Ascending aorta (tissue), 2 donors: ENCODE measurements at regions of chr11 and their contacts with region 1.

Region 1: GRCh38 chr11:46616998-46617675 is at the starts of genes ATG13 and HARBI1:
- DNase-seq: peak; percentile 36 to 94
- H3K4me3 ChIP-seq: peak within 1 kb of the TSS; percentile 96 to 100
- H3K27ac ChIP-seq: peak within 1 kb of the TSS; percentile 98 to 99
- H3K4me1 ChIP-seq: peaks cover 3 to 19% of the 10 kb centered on the region in 2 donors
- H3K27me3 ChIP-seq: no peaks in the 10 kb centered on the region
- CTCF ChIP-seq: no peak
- total RNA-seq, gene ATG13: 208 TPM
- total RNA-seq, gene HARBI1: not detected

Region 2: DNA sequence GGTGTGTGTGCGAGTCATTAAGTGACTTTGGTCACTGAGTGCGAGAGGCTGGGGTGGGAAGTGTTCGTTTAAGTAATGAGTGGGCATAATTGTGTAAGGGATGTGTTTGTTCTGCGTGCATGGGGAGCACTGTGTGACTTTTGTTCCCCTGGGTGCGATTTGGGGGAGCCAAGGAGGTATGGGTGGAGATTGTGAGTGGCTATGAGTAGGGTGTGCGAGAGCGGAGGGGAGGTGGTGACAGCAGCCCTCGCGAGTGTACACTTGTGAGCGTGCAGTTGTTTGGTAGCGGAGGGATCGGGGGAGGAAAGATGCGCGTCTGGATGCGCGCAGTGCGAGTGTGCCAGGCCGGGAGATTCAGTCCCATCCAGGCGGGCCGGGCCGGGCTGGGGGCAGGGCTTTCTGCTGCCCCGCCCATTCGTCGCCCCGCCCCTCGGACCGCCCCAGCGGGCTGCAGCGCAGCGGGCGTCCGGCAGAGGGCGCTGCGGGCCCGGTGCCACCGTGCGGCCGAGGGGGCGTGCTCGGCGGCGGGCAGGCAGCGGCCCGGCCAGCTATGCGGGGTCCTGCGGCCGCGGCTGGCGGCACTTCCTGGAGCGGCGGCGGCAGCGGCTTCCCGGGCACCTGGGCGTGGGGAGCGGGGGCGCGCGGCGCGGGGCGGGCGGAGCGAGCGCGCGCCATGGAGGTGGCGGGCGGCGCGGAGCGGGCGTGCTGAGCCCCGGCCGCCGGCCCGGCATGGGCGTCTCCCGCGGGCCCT is 270.1 kb before region 1 on chr11 and contains the start of gene DGKZ:
- intact Hi-C with region 1: loop called (anchors 2 kb)
- DNase-seq: peak; percentile 47 to 92
- H3K4me3 ChIP-seq: peak within 1 kb of the TSS; percentile 73 to 96
- H3K27ac ChIP-seq: peak within 1 kb of the TSS in 1 of 2 donors; percentile 37
- H3K4me1 ChIP-seq: peaks cover 9 to 14% of the 10 kb centered on the region in 2 donors
- H3K27me3 ChIP-seq: no peaks in the 10 kb centered on the region
- CTCF ChIP-seq: peak; percentile 43 to 100 (median 59)
- total RNA-seq, gene DGKZ: 123 TPM

Region 3: DNA sequence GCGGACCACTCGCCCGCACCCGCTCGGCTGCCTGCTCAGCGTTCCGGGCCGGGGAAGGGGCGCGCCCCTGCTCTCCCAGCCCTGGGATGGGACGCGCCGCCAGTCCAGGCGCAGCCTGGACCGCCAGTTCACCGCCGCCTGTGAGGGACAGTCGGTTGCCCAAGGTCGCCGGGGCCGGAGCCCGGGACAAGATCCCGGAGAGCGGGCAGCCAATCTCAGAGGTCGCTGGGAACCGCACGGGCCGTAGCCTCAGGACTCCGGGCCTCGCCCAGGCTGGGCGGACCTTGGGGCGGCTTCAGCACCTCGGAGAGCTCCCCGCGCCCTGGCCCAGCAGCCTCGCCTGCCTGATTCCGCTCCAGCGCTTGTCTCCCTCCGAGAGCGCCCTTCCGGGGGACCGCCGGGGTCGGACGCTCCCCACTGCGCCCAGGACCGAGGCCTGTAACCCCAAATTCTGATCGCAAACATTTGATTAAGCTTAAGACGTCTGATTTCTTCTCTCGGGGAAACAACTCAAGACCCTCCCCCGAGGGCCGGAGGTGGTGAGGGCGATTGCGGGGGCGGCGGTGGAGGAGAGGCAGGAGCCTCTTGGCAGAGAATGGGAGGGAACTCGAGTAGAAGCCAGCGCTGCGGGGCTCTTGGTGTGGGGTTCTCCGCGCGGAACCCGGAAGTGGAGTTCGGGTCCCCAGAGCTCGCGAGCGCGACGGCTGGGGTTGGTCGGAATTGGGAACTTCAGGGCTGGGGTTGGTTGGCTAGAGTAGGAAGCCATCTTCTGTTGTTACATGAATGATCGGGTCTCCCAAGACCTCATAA is 224.5 kb before region 1 on chr11:
- intact Hi-C with region 1: loop called (anchors 10 kb)
- DNase-seq: peak in 1 of 2 donors; percentile 84
- H3K4me3 ChIP-seq: peak overlapping the region; percentile 48 to 50
- H3K27ac ChIP-seq: no peak overlapping the region
- H3K4me1 ChIP-seq: peaks cover 14 to 21% of the 10 kb centered on the region in 2 donors
- H3K27me3 ChIP-seq: peaks cover 16% of the 10 kb centered on the region
- CTCF ChIP-seq: no peak

Region 4: DNA sequence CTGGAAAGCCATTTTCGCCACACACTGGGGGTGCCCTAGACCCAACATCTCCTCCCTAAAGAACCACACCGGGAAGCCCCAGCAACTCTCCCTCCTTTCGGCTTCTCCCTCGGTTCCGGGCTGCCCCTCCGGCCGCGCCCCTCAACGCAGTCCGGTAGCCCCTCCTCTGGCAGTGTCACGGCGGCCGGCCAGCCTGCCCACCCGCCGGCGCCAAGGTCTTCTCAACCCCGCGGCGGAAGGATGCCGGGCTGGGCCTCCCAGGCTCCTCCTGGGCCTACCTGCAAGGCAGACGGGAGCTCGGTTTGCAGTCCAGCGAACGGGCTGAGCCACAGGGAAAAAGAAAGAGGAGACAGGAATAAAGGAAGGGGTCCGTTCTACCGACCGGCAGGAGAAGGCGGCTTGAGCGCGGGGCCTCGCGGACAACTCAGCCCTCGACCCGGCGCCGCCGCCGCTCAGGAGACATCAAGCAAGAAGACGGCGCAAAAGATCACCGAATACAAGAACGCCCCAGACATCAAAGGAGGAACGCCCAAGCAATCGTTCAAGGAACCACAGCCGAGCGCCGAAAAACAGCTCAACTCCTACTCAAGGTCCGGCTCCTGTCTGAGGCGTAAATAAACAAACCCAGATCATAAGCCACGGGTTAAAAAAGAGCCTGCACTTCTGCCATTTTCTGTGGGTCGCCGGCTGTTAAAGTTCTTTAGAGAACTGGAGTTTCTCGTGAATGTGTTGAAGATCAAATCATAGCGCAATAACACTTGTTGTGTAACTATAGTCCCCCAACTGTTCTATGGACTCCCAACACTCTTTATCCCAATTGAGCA is 23.4 kb before region 1 on chr11 and contains the start of gene AMBRA1:
- intact Hi-C with region 1: loop called (anchors 1 kb)
- DNase-seq: peak; percentile 47 to 91
- H3K4me3 ChIP-seq: peak within 1 kb of the TSS; percentile 85 to 99
- H3K27ac ChIP-seq: peak within 1 kb of the TSS; percentile 75 to 83
- H3K4me1 ChIP-seq: peaks cover 3 to 36% of the 10 kb centered on the region in 2 donors
- H3K27me3 ChIP-seq: no peaks in the 10 kb centered on the region
- CTCF ChIP-seq: peak in 1 of 3 experiments; percentile 5
- total RNA-seq, gene AMBRA1: 12.1 TPM

Region 5: DNA sequence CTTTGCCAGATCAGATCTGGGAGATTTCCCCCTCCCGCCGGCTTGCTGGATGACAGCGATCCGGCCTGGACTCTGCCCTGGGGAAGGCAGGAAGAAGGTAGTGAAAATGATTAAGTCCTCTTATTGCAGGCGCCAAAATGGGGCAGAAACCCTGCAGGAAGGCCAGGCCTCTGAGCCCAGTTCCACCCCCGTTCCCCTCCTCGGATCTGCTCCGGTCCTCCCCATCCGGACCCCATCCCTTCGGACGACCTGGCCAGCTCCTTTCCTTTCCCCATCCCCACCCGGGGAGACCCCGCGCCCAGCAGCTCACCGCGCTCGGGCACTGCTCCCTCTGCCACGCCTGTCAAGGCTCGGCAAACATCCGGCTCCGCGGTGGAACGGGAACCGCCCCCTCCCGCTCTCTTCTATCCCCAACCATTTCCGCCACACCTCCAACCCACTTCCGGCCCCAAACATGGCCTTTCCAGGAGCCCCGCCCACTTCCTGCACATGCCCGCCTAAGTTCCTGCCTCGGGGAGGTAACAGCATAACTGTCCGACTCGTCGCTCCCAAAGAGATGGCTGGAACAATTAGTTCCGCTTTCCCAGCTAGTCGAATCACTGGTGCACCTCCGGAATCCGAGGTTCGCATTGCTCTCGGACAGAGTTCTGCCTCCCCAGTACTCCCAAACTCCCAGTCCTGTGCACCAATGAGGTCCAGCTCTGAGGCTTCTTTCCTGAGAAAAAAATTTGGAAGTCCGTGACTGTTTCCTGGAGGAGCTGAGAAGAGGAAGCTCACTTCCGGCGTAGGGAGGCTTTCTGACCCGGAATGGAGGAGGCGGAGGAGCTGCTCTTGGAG is 83.3 kb after region 1 on chr11 and contains the starts of genes ARHGAP1 and ZNF408:
- intact Hi-C with region 1: loop called (anchors 1 kb)
- DNase-seq: peak; percentile 96 to 100
- H3K4me3 ChIP-seq: peak within 1 kb of the TSS; percentile 79 to 82
- H3K27ac ChIP-seq: peak within 1 kb of the TSS; percentile 85 to 91
- H3K4me1 ChIP-seq: peaks cover 33 to 51% of the 10 kb centered on the region in 2 donors
- H3K27me3 ChIP-seq: no peaks in the 10 kb centered on the region
- CTCF ChIP-seq: no peak
- total RNA-seq, gene ARHGAP1: 104 TPM
- total RNA-seq, gene ZNF408: 9.7 TPM